Transverse colon (tissue), 4 donors: ENCODE measurements at regions of chr1 and their contacts with region 1.

Region 1: DNA sequence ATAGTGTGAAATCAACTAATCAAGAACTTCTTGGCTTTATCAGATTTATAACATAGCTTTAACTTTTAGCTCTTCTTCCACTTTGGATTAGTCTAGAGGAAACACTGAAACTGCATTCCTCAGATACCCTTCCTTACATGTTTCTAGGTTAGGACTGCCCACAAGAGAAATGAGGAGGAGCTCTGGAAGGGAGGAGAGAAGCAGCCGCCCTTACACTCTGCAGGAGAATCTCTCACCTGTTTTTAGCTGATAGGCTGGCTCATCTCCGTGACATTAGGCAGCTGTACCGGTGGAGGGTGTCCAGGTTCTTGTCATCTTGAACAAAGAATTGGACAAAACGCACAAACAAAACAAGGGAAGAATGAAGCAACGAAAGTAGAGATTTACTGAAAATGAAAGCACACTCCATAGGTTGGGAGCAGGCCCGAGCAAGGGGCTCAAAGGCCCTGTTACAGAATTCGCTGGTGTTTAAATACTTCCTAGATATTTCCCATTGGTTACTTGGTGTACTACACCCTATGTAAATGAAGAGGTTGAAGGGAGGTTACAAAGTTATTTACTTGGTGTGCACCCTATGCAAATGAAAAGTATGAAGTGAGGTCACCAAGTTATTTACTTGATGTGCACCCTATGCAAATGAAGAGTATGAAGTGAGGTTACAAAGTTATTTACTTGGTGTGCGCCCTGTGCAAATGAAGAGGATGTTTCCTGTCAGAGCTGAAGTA is 524.9 kb upstream of the CHRM3 start:
- DNase-seq: no peak
- H3K4me3 ChIP-seq: no peak overlapping the region
- H3K27ac ChIP-seq: no peak overlapping the region
- H3K4me1 ChIP-seq: no peaks in the 10 kb centered on the region
- H3K27me3 ChIP-seq: no peaks in the 10 kb centered on the region
- CTCF ChIP-seq: no peak
- EP300 ChIP-seq: no peak
- POLR2A ChIP-seq: no peak

Region 2: GRCh38 chr1:238302646-238303045 is 558.9 kb before region 1 on chr1:
- in situ Hi-C with region 1: no loop called
- intact Hi-C with region 1: loop called (anchors 5 kb)
- DNase-seq: no peak
- H3K4me3 ChIP-seq: no peak overlapping the region
- H3K27ac ChIP-seq: no peak overlapping the region
- H3K4me1 ChIP-seq: no peaks in the 10 kb centered on the region
- H3K27me3 ChIP-seq: no peaks in the 10 kb centered on the region
- CTCF ChIP-seq: no peak
- EP300 ChIP-seq: no peak
- POLR2A ChIP-seq: no peak

Region 3: DNA sequence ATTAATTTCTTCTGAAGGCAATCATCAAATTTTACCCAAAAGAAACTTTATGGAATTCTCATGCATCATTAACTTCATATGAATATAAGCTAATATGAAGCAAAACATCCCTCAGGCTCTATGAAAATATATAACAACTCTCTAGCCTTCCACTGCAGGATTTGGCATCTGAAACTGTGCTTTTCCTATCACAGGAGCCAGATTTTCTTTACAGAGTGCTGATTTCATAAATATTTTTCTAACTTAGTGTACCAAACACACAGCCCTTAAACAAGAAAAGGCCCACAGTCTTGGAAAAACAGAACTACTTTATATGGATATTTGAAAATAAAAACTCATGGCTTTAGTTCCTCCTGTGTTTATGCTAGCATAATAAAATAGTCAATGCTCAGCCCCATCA is 34.6 kb before region 1 on chr1:
- in situ Hi-C with region 1: no loop called
- intact Hi-C with region 1: no loop called
- DNase-seq: no peak
- H3K4me3 ChIP-seq: no peak overlapping the region
- H3K27ac ChIP-seq: no peak overlapping the region
- H3K4me1 ChIP-seq: no peaks in the 10 kb centered on the region
- H3K27me3 ChIP-seq: no peaks in the 10 kb centered on the region
- CTCF ChIP-seq: no peak
- EP300 ChIP-seq: no peak
- POLR2A ChIP-seq: no peak